ENCODE measurements at regions of chr2 and their contacts with region 1.

Region 1: GRCh38 chr2:72150157-72150865 is 2.6 kb upstream of the CYP26B1 start:
- DNase-seq: peak; percentile 93
- H3K4me3 Mint-ChIP-seq: peak overlapping the region; percentile 92
- H3K27ac Mint-ChIP-seq: no peak overlapping the region
- H3K4me1 Mint-ChIP-seq: peaks cover 31% of the 10 kb centered on the region
- H3K27me3 Mint-ChIP-seq: peaks cover 66% of the 10 kb centered on the region
- CTCF ChIP-seq: peak; percentile 72

Region 2: DNA sequence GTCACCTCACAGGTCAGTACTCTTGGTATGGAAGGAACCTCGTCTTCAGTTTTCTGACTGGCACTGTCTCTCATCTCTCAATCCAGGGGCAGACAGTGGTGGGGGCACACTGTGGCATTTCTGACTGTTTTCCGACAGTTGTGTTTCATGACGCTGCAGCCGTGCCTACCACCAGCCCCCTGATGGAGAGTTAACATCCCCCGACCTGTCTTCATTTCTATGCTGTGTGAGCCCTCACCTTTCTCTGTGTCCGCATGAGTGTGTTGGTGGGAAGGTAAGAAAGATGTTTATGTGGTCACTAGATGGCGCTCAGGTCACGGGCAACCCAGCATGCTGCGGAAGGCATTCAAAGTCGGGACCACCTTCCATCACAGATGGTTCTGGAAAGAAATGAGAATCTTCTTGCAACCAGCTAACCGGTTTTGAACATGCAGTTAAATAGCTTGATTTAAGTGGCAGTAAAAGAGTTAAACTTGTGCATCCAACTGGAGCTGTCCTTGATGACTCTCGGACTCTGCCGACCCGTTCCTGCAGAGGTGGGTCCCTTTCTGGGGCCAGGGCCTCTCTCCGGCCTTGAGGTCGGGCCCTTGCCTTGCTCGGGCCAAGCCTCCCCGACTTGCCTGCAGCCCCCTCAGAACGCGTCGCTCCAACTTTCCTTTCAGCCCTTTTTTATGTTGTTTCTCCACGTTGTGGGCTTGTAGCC is 604.6 kb before region 1 on chr2:
- CTCF ChIA-PET with region 1: no interaction called
- intact Hi-C with region 1: loop called (anchors 1 kb)
- DNase-seq: peak; percentile 59
- H3K4me3 Mint-ChIP-seq: peak overlapping the region; percentile 54
- H3K27ac Mint-ChIP-seq: no peak overlapping the region
- H3K4me1 Mint-ChIP-seq: peaks cover 17% of the 10 kb centered on the region
- H3K27me3 Mint-ChIP-seq: peaks cover 64% of the 10 kb centered on the region
- CTCF ChIP-seq: peak; percentile 74

Region 3: DNA sequence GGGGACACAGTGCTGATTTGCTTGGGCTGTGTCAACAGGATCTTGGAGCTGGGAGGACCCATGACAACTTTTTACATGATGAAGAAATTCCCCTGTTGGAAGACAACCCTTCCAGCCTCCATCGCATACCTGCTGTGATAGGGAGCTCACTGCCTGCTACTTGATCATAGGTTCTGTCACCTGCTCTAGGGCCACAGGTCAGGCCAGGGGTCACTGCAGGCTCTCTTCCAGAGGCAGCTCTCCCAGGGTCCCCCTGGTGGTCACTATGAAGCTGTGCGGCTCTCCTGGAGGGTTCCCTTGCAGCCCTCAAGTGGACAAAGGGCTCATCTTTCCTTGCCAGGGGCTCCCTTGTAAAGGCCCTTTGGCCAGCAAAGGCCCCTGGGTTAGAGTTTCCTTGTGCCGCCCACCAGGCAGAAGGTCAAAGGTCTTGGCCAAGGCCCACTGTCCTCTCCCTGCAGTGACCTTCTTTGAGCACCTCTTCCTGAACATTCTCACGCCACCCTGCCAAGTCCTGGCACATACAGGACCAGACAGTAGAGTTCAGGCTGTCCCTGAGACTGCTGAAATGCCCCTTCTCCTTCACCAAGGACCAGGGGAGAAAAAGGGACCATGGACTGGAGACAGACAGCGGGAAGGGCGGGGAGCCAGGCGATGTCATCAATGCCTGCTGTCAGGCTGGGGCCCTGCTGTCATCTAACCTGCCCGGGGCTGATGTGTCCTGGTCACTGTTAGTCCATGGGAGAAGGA is 351.9 kb before region 1 on chr2:
- CTCF ChIA-PET with region 1: no interaction called
- intact Hi-C with region 1: loop called (anchors 1 kb)
- DNase-seq: peak; percentile 42
- H3K4me3 Mint-ChIP-seq: no peak overlapping the region
- H3K27ac Mint-ChIP-seq: no peak overlapping the region
- H3K4me1 Mint-ChIP-seq: no peaks in the 10 kb centered on the region
- H3K27me3 Mint-ChIP-seq: peaks cover 54% of the 10 kb centered on the region
- CTCF ChIP-seq: peak; percentile 86

Region 4: GRCh38 chr2:71923887-71924533 is 226.3 kb before region 1 on chr2:
- CTCF ChIA-PET with region 1: interaction called, 118 read pairs
- intact Hi-C with region 1: loop called (anchors 1 kb)
- DNase-seq: peak; percentile 77
- H3K4me3 Mint-ChIP-seq: no peak overlapping the region
- H3K27ac Mint-ChIP-seq: no peak overlapping the region
- H3K4me1 Mint-ChIP-seq: no peaks in the 10 kb centered on the region
- H3K27me3 Mint-ChIP-seq: peaks cover 18% of the 10 kb centered on the region
- CTCF ChIP-seq: peak; percentile 79

Region 5: GRCh38 chr2:72115552-72116546 is 34.5 kb before region 1 on chr2:
- CTCF ChIA-PET with region 1: interaction called, 14 read pairs
- intact Hi-C with region 1: no loop called
- DNase-seq: peak; percentile 96
- H3K4me3 Mint-ChIP-seq: peak overlapping the region; percentile 56
- H3K27ac Mint-ChIP-seq: peak overlapping the region; percentile 77
- H3K4me1 Mint-ChIP-seq: peaks cover 16% of the 10 kb centered on the region
- H3K27me3 Mint-ChIP-seq: peaks cover 14% of the 10 kb centered on the region
- CTCF ChIP-seq: peak; percentile 64

Region 6: DNA sequence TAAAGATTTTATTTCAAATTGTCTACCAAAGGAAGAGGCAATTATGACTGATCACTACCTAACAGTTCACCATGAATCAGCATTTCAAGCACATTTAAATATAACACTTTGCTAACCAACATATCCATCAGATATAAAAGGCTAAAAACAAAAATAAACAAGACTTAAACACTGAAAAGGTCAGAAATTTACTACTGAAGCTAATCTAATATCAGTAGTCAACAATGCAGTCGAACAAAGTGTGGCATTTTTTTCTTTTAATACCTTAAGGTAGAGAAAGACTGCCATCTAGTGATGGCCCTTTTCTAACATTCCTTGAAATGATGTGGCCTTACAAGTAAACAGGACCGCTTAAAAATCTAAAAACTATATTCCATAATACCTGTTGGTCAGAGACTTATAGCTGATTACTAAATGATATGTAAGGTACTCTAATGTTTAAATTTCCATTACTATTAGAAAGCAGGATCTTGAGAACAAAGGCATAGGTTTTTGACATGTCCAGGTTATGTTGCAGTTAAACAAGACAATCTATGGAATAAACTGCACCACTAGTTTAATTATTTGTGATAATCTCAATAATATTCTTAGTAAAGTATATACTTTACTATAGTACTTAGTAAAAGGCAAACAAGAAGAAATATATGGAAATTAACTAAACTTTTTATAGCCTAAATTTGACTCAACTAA is 595.5 kb after region 1 on chr2:
- CTCF ChIA-PET with region 1: interaction called, 4 read pairs
- intact Hi-C with region 1: loop called (anchors 2 kb)
- DNase-seq: peak; percentile 43
- H3K4me3 Mint-ChIP-seq: no peak overlapping the region
- H3K27ac Mint-ChIP-seq: no peak overlapping the region
- H3K4me1 Mint-ChIP-seq: no peaks in the 10 kb centered on the region
- H3K27me3 Mint-ChIP-seq: no peaks in the 10 kb centered on the region
- CTCF ChIP-seq: peak; percentile 47

Measured in Calu3 (cell line).